GM12878 (cell line): ENCODE measurements at regions of chr6 and their contacts with region 1.

Region 1: DNA sequence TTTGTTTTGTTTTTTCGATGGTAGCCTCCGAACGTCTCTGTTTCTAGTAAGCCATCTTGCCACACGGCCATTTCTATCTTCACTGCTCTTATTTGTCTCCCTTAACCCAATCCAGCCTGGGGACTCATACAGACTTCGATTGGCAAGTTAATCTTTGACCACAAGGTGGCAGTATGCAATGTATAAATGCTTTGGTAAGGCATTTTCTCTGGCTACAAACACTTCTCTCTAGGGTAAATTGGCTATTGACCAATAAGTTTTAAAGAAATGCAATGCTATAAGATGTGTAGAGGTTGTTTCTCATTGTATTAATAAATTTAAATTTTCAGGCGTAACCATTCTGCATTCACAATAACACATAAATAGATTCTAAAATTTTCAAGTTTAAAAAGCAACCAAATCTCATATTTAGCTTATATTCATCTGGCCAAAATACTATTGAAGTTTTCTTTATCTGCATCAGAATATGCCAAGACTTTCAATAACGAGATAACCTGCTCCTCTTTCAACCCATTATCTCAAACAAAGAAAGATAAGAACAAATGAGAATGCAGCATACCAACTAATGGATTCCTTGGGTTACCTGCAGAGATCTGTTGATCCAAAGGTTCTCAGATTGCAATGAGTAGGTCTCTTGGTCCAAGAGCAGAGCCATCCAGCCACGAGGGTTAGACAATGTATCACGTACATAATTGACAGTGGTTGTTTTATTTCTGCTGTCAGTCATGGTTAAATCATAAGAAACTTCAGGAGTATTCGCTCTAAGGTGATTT is 231.9 kb downstream of the PKHD1 start:
- DNase-seq: peak; percentile 11
- ATAC-seq: peak; percentile 96
- H3K4me3 ChIP-seq: no peak overlapping the region
- H3K27ac ChIP-seq: no peak overlapping the region
- H3K4me1 ChIP-seq: no peaks in the 10 kb centered on the region
- H3K27me3 ChIP-seq: no peaks in the 10 kb centered on the region
- CTCF ChIP-seq: peak; percentile 59 to 67 (median 61)
- EP300 ChIP-seq: no peak
- POLR2A ChIP-seq: no peak
- RAD21 ChIP-seq: peak; percentile 93

Region 2: DNA sequence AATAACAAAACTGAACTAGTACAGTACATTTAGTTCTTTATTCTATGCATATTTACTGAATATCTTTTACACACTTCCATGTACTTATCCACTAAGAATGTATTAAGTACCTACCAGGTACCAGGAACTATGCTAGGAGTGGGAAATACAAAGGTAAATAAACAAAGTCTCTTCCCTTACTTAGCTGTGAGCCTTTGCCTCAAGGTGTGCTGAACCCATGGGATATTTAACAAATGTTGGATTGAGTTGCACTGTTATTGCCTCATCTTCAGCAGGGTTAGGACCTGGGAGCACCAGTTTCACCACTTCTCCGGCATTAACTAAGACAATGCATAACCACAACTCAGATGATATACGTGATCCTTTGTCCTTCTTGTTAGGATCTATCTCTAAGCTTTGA is 502.9 kb before region 1 on chr6:
- CTCF ChIA-PET with region 1: no interaction called
- POLR2A ChIA-PET with region 1: no interaction called
- RAD21 ChIA-PET with region 1: no interaction called
- SMC1A ChIA-PET with region 1: no interaction called
- in situ Hi-C with region 1: no loop called
- intact Hi-C with region 1: no loop called
- DNase-seq: no peak
- ATAC-seq: no peak
- H3K4me3 ChIP-seq: no peak overlapping the region
- H3K27ac ChIP-seq: no peak overlapping the region
- H3K4me1 ChIP-seq: no peaks in the 10 kb centered on the region
- H3K27me3 ChIP-seq: no peaks in the 10 kb centered on the region
- CTCF ChIP-seq: no peak
- EP300 ChIP-seq: no peak
- POLR2A ChIP-seq: no peak
- RAD21 ChIP-seq: no peak

Region 3: DNA sequence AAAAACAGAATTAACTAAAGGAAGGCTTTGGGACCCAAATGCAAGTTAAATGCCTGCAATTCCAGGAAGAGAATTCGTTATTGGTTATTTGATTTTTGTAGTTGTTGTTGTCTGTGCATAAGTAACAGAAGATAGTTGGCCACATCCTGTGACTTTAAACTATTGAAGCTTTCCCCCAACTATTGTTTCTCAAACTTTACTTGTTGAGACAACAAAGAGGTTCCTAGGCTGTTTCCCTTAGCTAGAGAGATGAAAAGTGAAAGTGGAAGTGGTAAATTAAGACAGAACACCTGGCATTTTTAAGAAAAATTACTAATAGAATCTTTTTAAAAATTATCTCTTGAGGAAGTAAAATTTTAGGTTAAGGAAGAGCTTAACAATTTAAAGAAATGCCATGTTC is 293.3 kb before region 1 on chr6:
- CTCF ChIA-PET with region 1: no interaction called
- POLR2A ChIA-PET with region 1: no interaction called
- RAD21 ChIA-PET with region 1: no interaction called
- SMC1A ChIA-PET with region 1: no interaction called
- in situ Hi-C with region 1: no loop called
- intact Hi-C with region 1: loop called (anchors 10 kb)
- DNase-seq: peak; percentile 19
- ATAC-seq: peak; percentile 92
- H3K4me3 ChIP-seq: no peak overlapping the region
- H3K27ac ChIP-seq: no peak overlapping the region
- H3K4me1 ChIP-seq: no peaks in the 10 kb centered on the region
- H3K27me3 ChIP-seq: no peaks in the 10 kb centered on the region; a peak in 1 of 4 replicates
- CTCF ChIP-seq: no peak
- EP300 ChIP-seq: no peak
- POLR2A ChIP-seq: no peak
- RAD21 ChIP-seq: no peak

Region 4: DNA sequence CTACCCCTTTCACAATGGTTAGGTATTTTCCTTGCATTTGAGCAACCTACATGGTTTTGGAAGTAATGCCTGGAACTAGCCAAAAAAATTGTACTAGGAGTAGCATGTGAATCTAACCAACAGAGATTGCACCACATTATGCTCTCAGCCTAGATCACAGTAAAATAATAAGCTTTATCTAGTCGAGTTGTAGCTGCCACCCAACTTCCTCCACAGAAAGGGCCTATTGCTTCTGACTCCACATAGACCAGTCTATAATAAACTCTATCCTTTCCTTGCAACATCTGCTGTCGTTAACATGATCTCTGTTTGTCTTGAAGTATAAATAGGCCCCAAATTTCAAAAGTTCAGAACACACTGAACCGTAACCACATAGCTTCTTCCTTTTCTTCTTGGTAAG is 143.6 kb before region 1 on chr6:
- CTCF ChIA-PET with region 1: no interaction called
- POLR2A ChIA-PET with region 1: no interaction called
- RAD21 ChIA-PET with region 1: no interaction called
- SMC1A ChIA-PET with region 1: no interaction called
- in situ Hi-C with region 1: no loop called
- intact Hi-C with region 1: no loop called
- DNase-seq: no peak
- ATAC-seq: no peak
- H3K4me3 ChIP-seq: no peak overlapping the region
- H3K27ac ChIP-seq: no peak overlapping the region
- H3K4me1 ChIP-seq: no peaks in the 10 kb centered on the region
- H3K27me3 ChIP-seq: no peaks in the 10 kb centered on the region
- CTCF ChIP-seq: no peak
- EP300 ChIP-seq: no peak
- POLR2A ChIP-seq: no peak
- RAD21 ChIP-seq: no peak

Region 5: DNA sequence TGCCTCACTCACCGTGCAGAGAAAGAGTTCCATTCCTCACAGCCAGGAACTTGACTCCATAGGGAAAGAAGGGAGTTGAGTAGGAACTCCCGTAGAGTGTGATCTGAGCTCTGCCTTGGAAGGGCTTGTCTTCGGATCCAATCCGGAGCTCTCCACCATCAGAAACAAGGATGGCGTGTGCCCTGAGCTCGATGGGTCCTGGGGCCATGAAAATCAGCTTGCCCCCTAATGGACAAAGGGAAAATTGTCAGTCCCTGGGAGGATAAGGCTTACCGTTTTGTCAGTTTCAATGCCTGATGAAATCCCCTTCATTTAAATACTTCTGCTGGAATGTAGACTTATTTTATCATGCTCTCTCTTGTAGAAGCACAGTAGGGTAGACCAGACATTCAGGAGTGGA is 78.6 kb after region 1 on chr6:
- CTCF ChIA-PET with region 1: interaction called, 21 read pairs
- POLR2A ChIA-PET with region 1: no interaction called
- RAD21 ChIA-PET with region 1: interaction called, 9 read pairs
- SMC1A ChIA-PET with region 1: interaction called, 12 read pairs
- in situ Hi-C with region 1: no loop called
- intact Hi-C with region 1: loop called (anchors 1 kb)
- DNase-seq: no peak
- ATAC-seq: peak; percentile 81
- H3K4me3 ChIP-seq: no peak overlapping the region
- H3K27ac ChIP-seq: no peak overlapping the region
- H3K4me1 ChIP-seq: peaks cover 6% of the 10 kb centered on the region
- H3K27me3 ChIP-seq: no peaks in the 10 kb centered on the region
- CTCF ChIP-seq: peak; percentile 21 to 64 (median 58); a peak in 5 of 6 replicates
- EP300 ChIP-seq: no peak
- POLR2A ChIP-seq: no peak
- RAD21 ChIP-seq: peak; percentile 49

Region 6: GRCh38 chr6:52020945-52021570 is 165.6 kb after region 1 on chr6:
- CTCF ChIA-PET with region 1: interaction called, 43 read pairs
- POLR2A ChIA-PET with region 1: no interaction called
- RAD21 ChIA-PET with region 1: interaction called, 7 read pairs
- SMC1A ChIA-PET with region 1: interaction called, 43 read pairs
- in situ Hi-C with region 1: loop called (anchors 5 kb)
- intact Hi-C with region 1: loop called (anchors 1 kb)
- DNase-seq: no peak
- ATAC-seq: peak; percentile 52; the same call in 2 of the 3 replicates
- H3K4me3 ChIP-seq: no peak overlapping the region
- H3K27ac ChIP-seq: no peak overlapping the region
- H3K4me1 ChIP-seq: no peaks in the 10 kb centered on the region
- H3K27me3 ChIP-seq: no peaks in the 10 kb centered on the region; a peak in 1 of 4 replicates
- CTCF ChIP-seq: peak; percentile 45 to 70 (median 48); a peak in 4 of 6 replicates
- EP300 ChIP-seq: no peak
- POLR2A ChIP-seq: no peak
- RAD21 ChIP-seq: peak; percentile 93

Region 7: GRCh38 chr6:52233975-52234823 is 378.7 kb after region 1 on chr6:
- CTCF ChIA-PET with region 1: no interaction called
- POLR2A ChIA-PET with region 1: no interaction called
- RAD21 ChIA-PET with region 1: no interaction called
- SMC1A ChIA-PET with region 1: interaction called, 3 read pairs
- in situ Hi-C with region 1: loop called (anchors 10 kb)
- intact Hi-C with region 1: no loop called
- DNase-seq: no peak
- ATAC-seq: peak; percentile 81
- H3K4me3 ChIP-seq: no peak overlapping the region
- H3K27ac ChIP-seq: no peak overlapping the region
- H3K4me1 ChIP-seq: peaks cover 9% of the 10 kb centered on the region
- H3K27me3 ChIP-seq: peaks cover 0 to 2% of the 10 kb centered on the region in 2 experiments; a peak in 2 of 4 replicates
- CTCF ChIP-seq: peak; percentile 71 to 78 (median 75)
- EP300 ChIP-seq: no peak
- POLR2A ChIP-seq: no peak
- RAD21 ChIP-seq: peak; percentile 93